ENCODE measurements at regions of chr22 and their contacts with region 1.

Region 1: DNA sequence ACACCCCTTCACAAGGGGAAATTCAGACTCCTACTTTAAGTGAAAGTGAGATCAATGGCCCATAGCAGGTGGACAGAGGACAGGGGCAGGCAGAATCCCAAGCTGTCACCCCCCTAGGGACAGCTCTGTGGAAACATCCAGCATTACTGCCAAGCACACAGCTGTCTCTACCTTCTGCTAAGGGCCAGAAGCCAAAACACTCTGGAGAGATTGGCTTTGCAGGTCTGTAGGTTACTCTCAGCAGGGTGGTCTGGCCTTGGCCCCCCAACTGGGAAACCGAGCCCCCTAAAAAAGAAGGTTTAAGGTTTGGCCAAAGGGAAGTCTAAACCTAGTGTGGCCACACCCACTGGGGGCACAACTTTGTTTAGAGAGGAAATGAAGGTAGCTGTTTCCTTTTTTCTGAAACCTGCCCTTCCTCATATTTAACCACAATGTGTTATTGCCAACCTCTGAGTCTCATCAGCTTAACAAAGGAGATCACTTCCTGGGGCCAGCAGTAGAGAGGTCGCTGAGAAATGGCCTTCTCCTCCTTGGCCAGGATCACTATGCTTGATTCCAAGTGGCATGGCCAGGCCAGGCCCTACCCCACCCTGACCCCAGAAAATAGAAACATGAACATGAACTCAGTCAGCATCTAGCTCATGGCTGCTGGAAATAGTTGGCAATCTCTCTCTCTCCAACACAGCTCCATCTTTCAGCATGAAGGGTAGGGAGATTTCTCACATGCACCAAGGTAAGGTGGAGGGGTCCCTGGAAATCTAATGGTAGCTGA is 25.9 kb upstream of the SCARF2 start:
- DNase-seq: peak in 3 of 5 donors; percentile 57 to 72 (median 62)
- H3K4me3 ChIP-seq: peak overlapping the region; percentile 30
- H3K4me3 Mint-ChIP-seq: peak overlapping the region in 6 of 7 donors; percentile 75 to 86 (median 79)
- H3K27ac ChIP-seq: peak overlapping the region; percentile 66
- H3K27ac Mint-ChIP-seq: peak overlapping the region; percentile 91 to 99 (median 97)
- H3K4me1 ChIP-seq: peaks cover 54% of the 10 kb centered on the region
- H3K4me1 Mint-ChIP-seq: peaks cover 55 to 65% (median 56%) of the 10 kb centered on the region in 3 donors
- H3K27me3 ChIP-seq: no peaks in the 10 kb centered on the region
- H3K27me3 Mint-ChIP-seq: no peaks in the 10 kb centered on the region

Region 2: GRCh38 chr22:20418211-20418788 is 45.2 kb before region 1 on chr22:
- CTCF ChIA-PET with region 1: interaction called, 28 read pairs
- POLR2A ChIA-PET with region 1: interaction called, 4 read pairs
- DNase-seq: peak; percentile 64 to 83 (median 67)
- H3K4me3 ChIP-seq: peak overlapping the region; percentile 56
- H3K4me3 Mint-ChIP-seq: peak overlapping the region in 6 of 7 donors; percentile 60 to 83 (median 74)
- H3K27ac ChIP-seq: no peak overlapping the region
- H3K27ac Mint-ChIP-seq: peak overlapping the region in 1 of 8 donors; percentile 43
- H3K4me1 ChIP-seq: peaks cover 11% of the 10 kb centered on the region
- H3K4me1 Mint-ChIP-seq: peaks cover 5 to 6% (median 5%) of the 10 kb centered on the region in 3 donors
- H3K27me3 ChIP-seq: peaks cover 3% of the 10 kb centered on the region
- H3K27me3 Mint-ChIP-seq: no peaks in the 10 kb centered on the region

Region 3: GRCh38 chr22:20430720-20431510 is 32.6 kb before region 1 on chr22:
- CTCF ChIA-PET with region 1: interaction called, 6 read pairs
- POLR2A ChIA-PET with region 1: interaction called, 16 read pairs
- DNase-seq: peak; percentile 35 to 73 (median 47)
- H3K4me3 ChIP-seq: peak overlapping the region; percentile 82
- H3K4me3 Mint-ChIP-seq: peak overlapping the region; percentile 77 to 92 (median 86)
- H3K27ac ChIP-seq: no peak overlapping the region
- H3K27ac Mint-ChIP-seq: no peak overlapping the region
- H3K4me1 ChIP-seq: peaks cover 28% of the 10 kb centered on the region
- H3K4me1 Mint-ChIP-seq: peaks cover 11 to 54% (median 14%) of the 10 kb centered on the region in 3 donors
- H3K27me3 ChIP-seq: peaks cover 29% of the 10 kb centered on the region
- H3K27me3 Mint-ChIP-seq: peaks cover 24 to 37% of the 10 kb centered on the region in 2 donors

Region 4: GRCh38 chr22:20495861-20496681 is 32.6 kb after region 1 on chr22:
- CTCF ChIA-PET with region 1: interaction called, 9 read pairs
- POLR2A ChIA-PET with region 1: interaction called, 15 read pairs
- DNase-seq: peak; percentile 90 to 94 (median 92)
- H3K4me3 ChIP-seq: peak overlapping the region; percentile 93
- H3K4me3 Mint-ChIP-seq: peak overlapping the region; percentile 87 to 96 (median 95)
- H3K27ac ChIP-seq: peak overlapping the region; percentile 96
- H3K27ac Mint-ChIP-seq: peak overlapping the region; percentile 77 to 99 (median 96)
- H3K4me1 ChIP-seq: peaks cover 29% of the 10 kb centered on the region
- H3K4me1 Mint-ChIP-seq: peaks cover 29 to 54% (median 34%) of the 10 kb centered on the region in 3 donors
- H3K27me3 ChIP-seq: no peaks in the 10 kb centered on the region
- H3K27me3 Mint-ChIP-seq: peaks cover 0 to 1% of the 10 kb centered on the region in 2 donors

Region 5: GRCh38 chr22:20568989-20569769 is 105.7 kb after region 1 on chr22:
- CTCF ChIA-PET with region 1: interaction called, 12 read pairs
- POLR2A ChIA-PET with region 1: interaction called, 15 read pairs
- DNase-seq: peak; percentile 74 to 95 (median 94)
- H3K4me3 ChIP-seq: peak overlapping the region; percentile 57
- H3K4me3 Mint-ChIP-seq: peak overlapping the region; percentile 85 to 92 (median 89)
- H3K27ac ChIP-seq: peak overlapping the region; percentile 26
- H3K27ac Mint-ChIP-seq: peak overlapping the region; percentile 94 to 100 (median 99)
- H3K4me1 ChIP-seq: peaks cover 83% of the 10 kb centered on the region
- H3K4me1 Mint-ChIP-seq: peaks cover 83 to 93% (median 93%) of the 10 kb centered on the region in 3 donors
- H3K27me3 ChIP-seq: no peaks in the 10 kb centered on the region
- H3K27me3 Mint-ChIP-seq: peaks cover 0 to 3% of the 10 kb centered on the region in 2 donors